Head of caudate nucleus (tissue), 42 donors: ENCODE measurements at regions of chr12 and their contacts with region 1.

Region 1: DNA sequence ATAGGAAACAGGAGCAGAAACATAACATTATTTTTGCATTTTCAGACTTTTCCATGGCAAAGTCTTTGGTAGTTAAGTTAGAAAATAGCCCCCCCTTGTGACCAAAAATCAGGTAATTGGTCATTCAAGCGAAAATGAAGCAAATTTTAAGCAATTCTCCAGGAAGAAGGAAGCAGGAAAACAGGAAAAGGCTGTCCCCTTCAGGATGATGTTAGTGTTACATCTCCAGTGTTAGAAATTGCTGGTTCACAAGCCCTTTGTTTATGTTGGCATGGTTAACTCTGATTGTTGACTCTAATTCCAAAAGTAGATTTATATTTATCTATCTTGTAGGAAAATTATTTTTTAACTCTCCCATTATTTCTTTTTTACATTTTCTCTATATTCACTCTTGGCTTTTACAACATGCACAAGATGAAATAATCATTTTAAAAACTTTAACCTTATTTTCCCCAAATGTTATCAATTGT is 18.8 kb upstream of the GAS2L3 start:
- DNase-seq: peak in 14 of 42 donors; percentile 18 to 75 (median 48)

Region 2: DNA sequence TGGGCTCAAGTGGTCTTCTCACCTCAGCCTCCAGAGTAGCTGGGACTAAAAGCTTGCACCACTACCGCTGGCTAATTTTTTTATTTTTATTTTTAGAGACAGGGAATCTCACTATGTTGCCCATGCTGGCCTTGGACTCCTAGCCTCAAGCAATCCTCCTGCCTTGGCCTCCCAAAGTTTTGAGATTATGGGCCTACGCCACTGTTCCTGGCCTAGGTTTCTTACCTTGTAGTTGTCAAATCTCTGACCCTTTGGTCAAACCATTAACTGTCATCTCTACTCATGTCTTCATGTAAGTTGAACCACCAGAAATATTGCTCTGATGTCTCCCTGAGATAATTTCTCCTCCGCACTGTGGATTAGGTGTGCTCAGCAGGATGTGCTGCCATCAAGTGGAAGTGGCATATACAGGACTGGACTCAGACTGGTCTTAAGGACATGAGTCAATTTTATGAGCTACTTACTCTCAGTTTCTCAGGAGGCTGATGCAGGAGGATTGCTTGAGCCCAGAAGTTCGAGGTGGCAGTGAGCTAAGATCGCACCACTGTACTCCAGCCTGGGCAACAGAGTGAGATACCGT is 325.5 kb before region 1 on chr12:
- intact Hi-C with region 1: loop called (anchors 10 kb)
- DNase-seq: no peak

Region 3: GRCh38 chr12:100356644-100357223 is 197.9 kb before region 1 on chr12 and contains the start of gene SLC17A8:
- intact Hi-C with region 1: loop called (anchors 10 kb)
- DNase-seq: peak in 1 of 42 donors; percentile 16